K562 (cell line): ENCODE measurements at regions of chr13 and their contacts with region 1.

Region 1: DNA sequence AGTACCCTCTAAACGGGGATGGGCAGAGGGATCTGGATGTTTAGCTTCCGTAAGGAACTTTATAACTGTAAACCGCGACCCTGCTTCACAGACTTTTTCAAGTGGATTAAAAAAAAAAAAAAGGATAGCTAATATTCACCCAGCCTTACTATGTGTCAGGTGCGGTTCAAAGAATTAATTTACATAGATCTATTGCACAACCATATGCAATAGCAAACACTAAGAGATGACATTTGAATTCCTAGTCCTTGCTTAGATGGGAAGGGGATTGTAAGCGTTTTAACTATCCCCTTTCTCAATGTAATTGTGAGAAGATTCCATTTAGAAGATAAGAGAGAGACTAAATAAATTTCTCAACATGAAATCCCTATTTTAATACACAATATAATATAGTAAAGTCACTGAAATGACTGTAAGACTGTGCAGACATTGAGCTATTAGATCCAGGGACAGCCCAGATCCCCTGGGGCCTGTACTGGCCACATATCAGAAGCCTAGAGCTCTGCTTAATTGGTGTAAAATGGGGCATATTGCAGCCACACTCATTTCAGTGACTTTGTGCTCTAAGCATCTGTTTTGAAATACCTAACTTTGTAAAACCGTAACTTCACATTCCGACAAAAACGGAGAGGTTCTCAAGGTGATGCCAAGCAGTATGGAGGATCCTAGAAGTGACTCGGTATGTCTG is 13.6 kb downstream of the LATS2 start:
- DNase-seq: no peak
- ATAC-seq: no peak
- H3K4me3 ChIP-seq: no peak overlapping the region
- H3K27ac ChIP-seq: no peak overlapping the region
- H3K4me1 ChIP-seq: no peaks in the 10 kb centered on the region; a peak in 1 of 5 replicates
- H3K27me3 ChIP-seq: no peaks in the 10 kb centered on the region
- CTCF ChIP-seq: no peak
- EP300 ChIP-seq: no peak
- POLR2A ChIP-seq: no peak
- RAD21 ChIP-seq: no peak

Region 2: GRCh38 chr13:20969182-20969581 is 78.6 kb before region 1 on chr13:
- CTCF ChIA-PET with region 1: no interaction called
- POLR2A ChIA-PET with region 1: no interaction called
- in situ Hi-C with region 1: no loop called
- intact Hi-C with region 1: loop called (anchors 2 kb)
- DNase-seq: no peak
- ATAC-seq: no peak
- H3K4me3 ChIP-seq: no peak overlapping the region
- H3K27ac ChIP-seq: no peak overlapping the region
- H3K4me1 ChIP-seq: no peaks in the 10 kb centered on the region
- H3K27me3 ChIP-seq: peaks cover 4 to 5% of the 10 kb centered on the region in 2 experiments; a peak in 2 of 5 replicates
- CTCF ChIP-seq: no peak
- EP300 ChIP-seq: no peak
- POLR2A ChIP-seq: no peak
- RAD21 ChIP-seq: no peak